ENCODE measurements at regions of chr3 and their contacts with region 1.

Region 1: GRCh38 chr3:12484198-12484974 is at the start of gene TSEN2:
- DNase-seq: peak; percentile 96
- H3K4me3 Mint-ChIP-seq: peak within 1 kb of the TSS; percentile 83
- H3K27ac Mint-ChIP-seq: peak within 1 kb of the TSS; percentile 69
- H3K4me1 Mint-ChIP-seq: peaks cover 51% of the 10 kb centered on the region
- H3K27me3 Mint-ChIP-seq: no peaks in the 10 kb centered on the region
- CTCF ChIP-seq: no peak
- total RNA-seq, gene TSEN2: 26.7 and 32.0 TPM in 2 replicates

Region 2: GRCh38 chr3:12135029-12135657 is 349.2 kb before region 1 on chr3:
- CTCF ChIA-PET with region 1: interaction called, 20 read pairs
- intact Hi-C with region 1: loop called (anchors 1 kb)
- DNase-seq: peak; percentile 76
- H3K4me3 Mint-ChIP-seq: no peak overlapping the region
- H3K27ac Mint-ChIP-seq: no peak overlapping the region
- H3K4me1 Mint-ChIP-seq: peaks cover 13% of the 10 kb centered on the region
- H3K27me3 Mint-ChIP-seq: peaks cover 48% of the 10 kb centered on the region
- CTCF ChIP-seq: peak; percentile 54

Region 3: DNA sequence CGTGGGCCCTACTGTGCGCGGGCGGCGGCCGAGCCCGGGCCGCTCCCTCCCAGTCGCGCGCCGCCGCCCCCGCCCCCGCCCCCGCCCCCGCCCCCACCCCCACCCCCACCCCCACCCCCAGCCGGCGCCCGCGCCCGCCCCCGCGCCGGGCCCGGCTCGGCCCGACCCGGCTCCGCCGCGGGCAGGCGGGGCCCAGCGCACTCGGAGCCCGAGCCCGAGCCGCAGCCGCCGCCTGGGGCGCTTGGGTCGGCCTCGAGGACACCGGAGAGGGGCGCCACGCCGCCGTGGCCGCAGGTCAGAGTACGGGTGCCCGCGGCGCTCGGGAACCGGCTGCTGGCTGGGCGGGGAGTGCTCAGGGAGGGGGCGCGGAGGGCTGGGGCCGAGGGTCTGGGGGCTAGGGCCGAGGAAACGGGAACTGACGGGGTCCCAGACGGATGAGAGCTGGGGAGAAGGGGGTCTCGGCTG is 196.6 kb before region 1 on chr3:
- CTCF ChIA-PET with region 1: interaction called, 3 read pairs
- intact Hi-C with region 1: loop called (anchors 5 kb)
- DNase-seq: peak; percentile 63
- H3K4me3 Mint-ChIP-seq: peak overlapping the region; percentile 81
- H3K27ac Mint-ChIP-seq: peak overlapping the region; percentile 84
- H3K4me1 Mint-ChIP-seq: peaks cover 16% of the 10 kb centered on the region
- H3K27me3 Mint-ChIP-seq: no peaks in the 10 kb centered on the region
- CTCF ChIP-seq: no peak

Region 4: DNA sequence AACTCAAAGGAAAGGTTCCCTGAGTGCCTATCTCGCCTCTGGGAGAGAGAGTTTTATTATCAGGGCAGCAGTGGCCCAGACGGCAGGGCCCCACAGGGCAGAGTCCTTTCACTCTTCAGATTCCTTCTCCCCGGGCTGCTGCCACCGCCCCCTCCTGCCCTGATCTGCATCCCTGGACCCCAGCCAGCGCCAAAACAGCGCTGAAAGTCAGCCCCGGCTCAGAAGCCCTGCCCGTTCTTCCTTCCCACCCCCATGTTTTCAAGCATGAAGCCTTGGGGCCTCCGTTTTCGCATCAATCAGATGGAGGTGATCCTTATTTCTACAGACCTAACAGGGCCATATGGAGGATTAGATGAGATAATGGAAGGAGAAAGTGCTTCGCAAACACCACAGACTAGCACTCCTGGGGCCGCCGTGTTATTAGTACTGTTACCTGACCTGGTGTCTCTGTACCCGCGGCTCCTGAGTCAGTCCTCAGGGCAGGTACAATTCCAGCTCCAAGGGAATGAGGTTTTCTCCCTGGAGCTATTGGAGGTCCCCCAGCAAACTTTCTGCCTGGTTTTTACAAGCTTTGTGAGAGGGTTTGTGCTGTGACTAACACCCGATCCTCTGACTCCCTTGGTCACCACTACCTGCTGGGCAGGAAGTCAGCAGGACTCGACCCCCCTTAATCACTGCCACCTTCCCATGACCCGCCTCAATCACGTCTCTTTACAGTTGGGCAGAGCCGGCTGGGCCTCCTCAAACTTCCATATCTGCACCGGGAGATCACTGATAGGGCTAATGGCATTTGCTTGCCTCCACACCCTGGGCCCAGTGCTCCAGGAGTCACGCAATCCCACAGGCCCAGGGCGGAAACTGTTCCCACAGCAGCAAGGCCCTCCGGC is 39.6 kb before region 1 on chr3:
- CTCF ChIA-PET with region 1: interaction called, 3 read pairs
- intact Hi-C with region 1: loop called (anchors 5 kb)
- DNase-seq: peak; percentile 90
- H3K4me3 Mint-ChIP-seq: peak overlapping the region; percentile 51
- H3K27ac Mint-ChIP-seq: peak overlapping the region; percentile 94
- H3K4me1 Mint-ChIP-seq: peaks cover 56% of the 10 kb centered on the region
- H3K27me3 Mint-ChIP-seq: no peaks in the 10 kb centered on the region
- CTCF ChIP-seq: no peak

Region 5: DNA sequence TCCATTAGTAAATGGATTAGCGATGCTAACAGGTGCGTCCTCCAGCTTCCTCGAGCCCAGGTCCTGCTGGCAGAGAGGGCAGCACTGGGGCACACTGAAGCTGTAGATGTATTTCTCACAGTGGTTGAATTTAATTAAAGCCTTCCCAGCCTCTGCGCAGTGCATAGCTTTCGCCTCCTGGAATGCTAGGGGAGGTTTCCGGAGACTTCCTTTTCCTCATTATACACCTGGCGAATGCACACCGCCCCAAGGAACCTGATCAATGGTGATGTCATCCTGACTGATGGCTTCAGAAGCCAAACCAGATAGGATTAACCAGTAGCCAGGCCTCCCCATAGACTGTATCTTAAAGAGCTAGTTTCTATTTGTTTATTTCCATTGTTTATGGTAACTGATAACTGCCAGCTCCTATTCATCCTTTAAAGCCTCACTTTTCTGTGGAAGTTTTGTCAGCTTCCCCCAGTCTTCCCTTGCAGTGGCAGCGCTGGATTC is 61.0 kb after region 1 on chr3 and contains the start of gene MKRN2OS:
- CTCF ChIA-PET with region 1: interaction called, 5 read pairs
- intact Hi-C with region 1: loop called (anchors 2 kb)
- DNase-seq: peak; percentile 78
- H3K4me3 Mint-ChIP-seq: peak within 1 kb of the TSS; percentile 60
- H3K27ac Mint-ChIP-seq: peak within 1 kb of the TSS; percentile 75
- H3K4me1 Mint-ChIP-seq: no peaks in the 10 kb centered on the region
- H3K27me3 Mint-ChIP-seq: no peaks in the 10 kb centered on the region
- CTCF ChIP-seq: no peak
- total RNA-seq, gene MKRN2OS: 2.1 and 3.9 TPM in 2 replicates

Region 6: DNA sequence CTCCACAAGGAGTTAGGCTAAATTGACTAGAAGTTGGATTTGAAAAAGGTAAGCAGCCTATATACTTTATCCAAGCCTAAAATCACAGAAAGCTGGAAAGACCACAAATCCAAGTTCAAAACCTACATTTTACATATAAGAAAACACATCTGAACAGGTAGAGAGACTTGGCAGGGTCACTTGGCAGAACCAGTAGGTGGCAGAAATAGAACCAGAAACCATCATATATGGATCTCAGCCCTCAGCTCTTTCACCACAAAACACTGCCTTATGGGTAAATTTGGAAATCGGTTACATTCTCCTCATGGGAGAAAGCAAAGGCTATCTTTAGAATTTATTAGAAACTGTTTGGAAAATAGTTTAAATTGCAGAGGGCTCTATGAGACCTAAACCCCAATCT is 116.7 kb after region 1 on chr3:
- CTCF ChIA-PET with region 1: no interaction called
- intact Hi-C with region 1: no loop called
- DNase-seq: no peak
- H3K4me3 Mint-ChIP-seq: no peak overlapping the region
- H3K27ac Mint-ChIP-seq: no peak overlapping the region
- H3K4me1 Mint-ChIP-seq: no peaks in the 10 kb centered on the region
- H3K27me3 Mint-ChIP-seq: no peaks in the 10 kb centered on the region
- CTCF ChIP-seq: no peak

Region 7: GRCh38 chr3:12994607-12995388 is 510.4 kb after region 1 on chr3:
- CTCF ChIA-PET with region 1: no interaction called
- intact Hi-C with region 1: no loop called
- DNase-seq: peak; percentile 94
- H3K4me3 Mint-ChIP-seq: peak overlapping the region; percentile 79
- H3K27ac Mint-ChIP-seq: peak overlapping the region; percentile 65
- H3K4me1 Mint-ChIP-seq: peaks cover 11% of the 10 kb centered on the region
- H3K27me3 Mint-ChIP-seq: no peaks in the 10 kb centered on the region
- CTCF ChIP-seq: peak; percentile 75

Measured in Calu3 (cell line).